ENCODE measurements at regions of chr17 and their contacts with region 1.

Region 1: GRCh38 chr17:29148790-29149430 is 31.3 kb downstream of the MYO18A start:
- DNase-seq: peak; percentile 92
- H3K4me3 Mint-ChIP-seq: peak overlapping the region; percentile 61
- H3K27ac Mint-ChIP-seq: peak overlapping the region; percentile 85
- H3K4me1 Mint-ChIP-seq: peaks cover 60% of the 10 kb centered on the region
- H3K27me3 Mint-ChIP-seq: no peaks in the 10 kb centered on the region
- CTCF ChIP-seq: peak; percentile 98

Region 2: GRCh38 chr17:28763804-28764266 is 385.1 kb before region 1 on chr17:
- CTCF ChIA-PET with region 1: no interaction called
- POLR2A ChIA-PET with region 1: no interaction called
- intact Hi-C with region 1: no loop called
- DNase-seq: peak; percentile 83
- H3K4me3 Mint-ChIP-seq: no peak overlapping the region
- H3K27ac Mint-ChIP-seq: peak overlapping the region; percentile 16
- H3K4me1 Mint-ChIP-seq: peaks cover 10% of the 10 kb centered on the region
- H3K27me3 Mint-ChIP-seq: no peaks in the 10 kb centered on the region
- CTCF ChIP-seq: peak; percentile 70

Region 3: DNA sequence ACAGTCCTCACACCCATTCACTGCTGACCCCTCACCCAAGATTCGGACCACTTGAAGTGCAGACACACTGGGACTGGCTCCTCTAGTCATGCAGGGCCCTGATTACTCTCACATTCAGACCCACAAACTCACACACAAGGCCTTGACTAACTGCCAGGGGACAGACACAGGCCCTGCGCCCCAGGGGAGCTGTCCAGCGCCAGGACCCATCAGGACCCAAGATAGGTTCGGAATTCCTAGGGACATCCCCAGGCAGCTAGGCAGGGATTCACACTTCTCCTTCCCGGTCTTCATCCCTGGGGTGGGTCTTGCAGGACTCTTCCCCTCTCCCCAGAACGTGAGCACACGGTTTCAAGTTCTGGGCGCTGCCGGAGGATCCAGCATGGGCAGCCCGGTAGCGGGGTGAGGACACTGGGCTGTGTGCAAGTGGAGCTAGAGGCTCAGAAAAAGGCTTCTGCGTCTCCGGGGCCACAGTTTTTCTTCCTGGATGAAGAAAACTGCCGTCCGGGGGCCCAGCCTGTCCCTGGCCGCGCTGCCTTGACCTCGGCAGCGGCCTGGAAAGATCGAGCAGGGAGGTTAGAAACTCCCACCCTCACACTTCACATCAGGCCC is 144.7 kb before region 1 on chr17:
- CTCF ChIA-PET with region 1: no interaction called
- POLR2A ChIA-PET with region 1: no interaction called
- intact Hi-C with region 1: no loop called
- DNase-seq: peak; percentile 11
- H3K4me3 Mint-ChIP-seq: no peak overlapping the region
- H3K27ac Mint-ChIP-seq: no peak overlapping the region
- H3K4me1 Mint-ChIP-seq: peaks cover 8% of the 10 kb centered on the region
- H3K27me3 Mint-ChIP-seq: peaks cover 28% of the 10 kb centered on the region
- CTCF ChIP-seq: no peak

Region 4: DNA sequence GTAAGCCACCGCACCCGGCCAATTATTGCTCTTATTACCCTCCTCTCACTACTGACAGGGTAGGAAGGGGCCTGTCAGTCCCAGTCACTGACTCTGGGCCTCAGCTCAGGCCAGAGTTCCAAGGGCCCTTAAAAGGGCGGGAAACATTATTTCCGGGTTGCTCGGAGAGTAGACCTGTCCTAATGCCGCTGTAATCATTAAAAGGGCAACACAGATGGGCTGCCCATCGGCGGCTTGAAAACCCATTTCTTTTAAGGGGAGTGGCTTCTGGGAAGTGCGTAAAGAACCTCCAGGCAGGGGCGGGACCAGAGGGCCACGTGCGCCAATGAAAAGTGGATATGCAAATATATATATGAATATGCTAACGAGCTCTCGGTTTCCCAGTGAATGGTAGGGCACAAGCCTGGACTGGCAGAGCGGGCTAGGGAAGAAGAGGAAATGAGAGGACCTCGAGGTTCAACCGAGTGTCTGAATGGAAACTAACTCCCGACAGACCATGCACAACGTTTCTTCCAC is 79.3 kb before region 1 on chr17:
- CTCF ChIA-PET with region 1: no interaction called
- POLR2A ChIA-PET with region 1: no interaction called
- intact Hi-C with region 1: no loop called
- DNase-seq: peak; percentile 86
- H3K4me3 Mint-ChIP-seq: no peak overlapping the region
- H3K27ac Mint-ChIP-seq: no peak overlapping the region
- H3K4me1 Mint-ChIP-seq: no peaks in the 10 kb centered on the region
- H3K27me3 Mint-ChIP-seq: no peaks in the 10 kb centered on the region
- CTCF ChIP-seq: no peak

Region 5: DNA sequence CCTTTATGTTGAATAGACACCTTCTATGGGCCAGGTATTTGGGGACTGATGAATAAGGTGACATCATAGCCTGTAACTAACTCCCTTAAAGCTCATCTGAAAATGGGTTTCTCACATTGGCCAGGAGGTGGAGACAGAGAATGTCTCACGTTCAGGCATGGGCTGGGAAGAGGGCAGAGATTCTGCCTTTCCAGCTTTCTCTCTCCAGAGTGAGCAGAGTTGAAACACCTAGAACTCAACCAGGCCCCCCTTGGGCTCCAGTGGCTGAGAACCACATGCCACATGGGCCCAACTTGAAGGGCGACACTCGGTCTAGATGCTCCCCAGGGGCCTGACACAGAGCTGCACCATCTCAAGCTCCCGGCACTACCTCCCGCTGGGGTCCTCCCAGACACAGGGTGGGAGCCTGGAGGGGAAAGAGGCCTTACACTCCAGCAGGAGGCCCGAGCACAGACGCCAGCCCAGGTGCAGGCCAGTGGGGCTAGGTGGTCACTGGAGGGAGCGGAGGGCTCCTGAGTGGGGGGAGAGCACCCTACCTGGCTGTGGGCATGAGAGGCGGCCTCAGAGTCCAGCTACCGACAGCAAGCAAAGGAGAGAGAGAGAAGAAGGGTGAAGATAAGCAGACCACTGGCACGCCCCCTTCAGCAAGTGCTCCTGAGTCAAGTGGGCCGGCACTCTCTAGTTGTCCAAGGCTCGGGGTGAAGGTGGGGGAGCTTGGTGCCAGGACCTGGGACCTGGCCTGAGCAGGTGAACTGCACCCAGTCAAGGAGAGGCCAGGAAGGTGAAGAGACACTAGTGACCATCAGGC is 24.6 kb before region 1 on chr17:
- CTCF ChIA-PET with region 1: interaction called, 40 read pairs
- POLR2A ChIA-PET with region 1: interaction called, 7 read pairs
- intact Hi-C with region 1: loop called (anchors 1 kb)
- DNase-seq: peak; percentile 83
- H3K4me3 Mint-ChIP-seq: no peak overlapping the region
- H3K27ac Mint-ChIP-seq: peak overlapping the region; percentile 82
- H3K4me1 Mint-ChIP-seq: peaks cover 13% of the 10 kb centered on the region
- H3K27me3 Mint-ChIP-seq: no peaks in the 10 kb centered on the region
- CTCF ChIP-seq: peak; percentile 77

Region 6: DNA sequence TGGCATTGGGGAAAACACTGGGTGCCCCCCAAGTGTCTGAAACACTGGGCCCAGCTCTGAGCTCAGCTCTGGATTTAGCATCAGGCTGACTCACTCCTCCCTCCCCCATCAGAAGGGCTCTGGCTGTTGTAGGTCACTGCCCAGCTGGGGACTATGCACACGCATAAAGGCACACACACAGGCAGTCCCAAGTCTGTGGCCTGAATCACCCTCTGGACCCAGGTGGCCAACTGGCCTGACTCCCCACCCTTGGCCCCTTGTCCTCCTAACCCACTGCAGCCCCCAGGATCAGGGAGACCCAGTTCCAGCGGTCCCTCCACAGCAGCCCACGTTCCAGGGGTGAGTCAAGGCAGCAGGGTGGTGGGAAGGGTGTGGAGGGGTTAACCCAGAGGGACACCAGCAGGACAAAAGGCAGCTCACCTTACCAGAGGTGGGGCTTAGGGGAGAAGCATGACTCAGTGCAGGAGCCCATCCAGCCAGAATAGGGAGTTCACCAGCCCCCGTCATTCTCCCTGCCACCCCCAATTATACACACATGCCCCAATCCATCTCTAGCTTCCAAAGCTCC is 15.7 kb before region 1 on chr17:
- CTCF ChIA-PET with region 1: interaction called, 20 read pairs
- POLR2A ChIA-PET with region 1: interaction called, 7 read pairs
- intact Hi-C with region 1: no loop called
- DNase-seq: peak; percentile 47
- H3K4me3 Mint-ChIP-seq: no peak overlapping the region
- H3K27ac Mint-ChIP-seq: peak overlapping the region; percentile 61
- H3K4me1 Mint-ChIP-seq: peaks cover 26% of the 10 kb centered on the region
- H3K27me3 Mint-ChIP-seq: no peaks in the 10 kb centered on the region
- CTCF ChIP-seq: no peak

Region 7: DNA sequence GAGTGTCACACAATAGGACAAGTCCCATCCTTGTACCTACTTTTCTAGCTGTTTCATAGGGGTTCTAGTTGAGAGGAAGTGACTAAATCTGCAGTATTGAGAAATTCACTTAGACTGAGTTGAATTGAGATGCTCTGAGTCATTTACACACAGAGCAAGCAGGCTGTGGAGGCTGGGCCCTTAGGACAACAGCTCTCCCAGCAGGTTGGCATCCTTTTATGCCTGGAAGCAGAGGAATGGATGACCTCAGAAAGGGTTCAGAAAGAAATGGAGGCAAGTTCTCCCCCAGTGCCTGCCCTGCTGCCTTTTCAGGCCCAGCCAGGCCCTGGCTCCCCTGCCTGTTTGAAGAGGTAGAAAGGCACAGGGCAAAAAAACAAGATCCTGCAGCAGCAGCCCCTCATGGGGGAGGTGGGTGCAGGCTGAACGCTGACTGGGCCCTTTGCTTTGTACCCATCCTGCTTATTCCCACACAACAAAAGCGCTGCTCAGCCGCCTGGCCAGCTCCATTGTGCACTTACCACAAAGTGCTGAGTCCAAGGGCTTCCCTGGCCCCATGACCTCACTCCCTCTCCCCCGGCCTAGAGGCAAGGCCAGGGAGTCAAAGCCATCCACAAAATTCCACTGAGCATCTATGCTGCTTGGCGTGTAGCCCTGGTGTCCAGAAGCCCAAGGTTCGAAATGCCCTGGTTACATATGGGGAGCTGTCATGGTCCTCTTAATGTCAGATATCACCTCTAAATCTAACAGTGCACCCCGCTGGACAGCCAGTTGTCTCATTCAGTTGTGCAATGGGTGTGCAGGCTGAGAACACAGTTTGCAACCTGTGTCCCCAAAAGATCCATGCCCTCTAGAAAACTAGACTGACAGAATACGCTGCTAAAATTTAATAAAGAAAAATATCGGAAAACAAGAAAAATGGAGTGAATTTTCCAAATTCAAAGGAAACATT is 92.4 kb after region 1 on chr17:
- CTCF ChIA-PET with region 1: interaction called, 18 read pairs
- POLR2A ChIA-PET with region 1: interaction called, 26 read pairs
- intact Hi-C with region 1: no loop called
- DNase-seq: peak; percentile 97
- H3K4me3 Mint-ChIP-seq: no peak overlapping the region
- H3K27ac Mint-ChIP-seq: peak overlapping the region; percentile 75
- H3K4me1 Mint-ChIP-seq: peaks cover 32% of the 10 kb centered on the region
- H3K27me3 Mint-ChIP-seq: no peaks in the 10 kb centered on the region
- CTCF ChIP-seq: no peak

Region 8: GRCh38 chr17:29252101-29252866 is 103.4 kb after region 1 on chr17:
- CTCF ChIA-PET with region 1: interaction called, 13 read pairs
- POLR2A ChIA-PET with region 1: interaction called, 12 read pairs
- intact Hi-C with region 1: no loop called
- DNase-seq: no peak
- H3K4me3 Mint-ChIP-seq: no peak overlapping the region
- H3K27ac Mint-ChIP-seq: peak overlapping the region; percentile 22
- H3K4me1 Mint-ChIP-seq: peaks cover 30% of the 10 kb centered on the region
- H3K27me3 Mint-ChIP-seq: no peaks in the 10 kb centered on the region
- CTCF ChIP-seq: peak; percentile 62